ENCODE measurements at regions of chr5 and their contacts with region 1.

Region 1: DNA sequence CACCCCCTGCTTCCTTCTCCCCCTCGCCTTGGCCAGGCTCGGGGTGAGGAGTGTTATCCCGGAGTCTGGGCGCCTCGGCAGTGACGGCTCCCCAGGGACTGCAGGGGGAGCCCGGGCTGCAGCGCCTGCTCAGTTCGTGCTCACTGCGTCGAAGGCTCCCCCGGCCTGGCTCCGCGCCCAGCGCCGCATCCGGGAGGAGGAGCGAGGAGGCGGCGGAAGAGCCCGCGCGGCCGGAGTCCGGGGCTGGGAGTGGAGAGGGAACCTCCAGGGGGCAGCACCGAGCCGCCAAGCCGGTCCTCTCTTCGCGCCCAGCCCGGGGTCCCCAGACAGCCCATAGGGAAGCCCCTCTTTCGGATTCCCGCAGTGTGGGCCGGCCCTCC is 1.3 kb upstream of the EGR1 start:
- DNase-seq: peak; percentile 80 to 94 (median 91)
- H3K4me3 ChIP-seq: peak overlapping the region; percentile 66 to 100 (median 89)
- H3K27ac ChIP-seq: peak overlapping the region; percentile 82 to 99 (median 96)
- H3K27me3 ChIP-seq: no peaks in the 10 kb centered on the region
- CTCF ChIP-seq: peak; percentile 67 to 97 (median 89)

Region 2: DNA sequence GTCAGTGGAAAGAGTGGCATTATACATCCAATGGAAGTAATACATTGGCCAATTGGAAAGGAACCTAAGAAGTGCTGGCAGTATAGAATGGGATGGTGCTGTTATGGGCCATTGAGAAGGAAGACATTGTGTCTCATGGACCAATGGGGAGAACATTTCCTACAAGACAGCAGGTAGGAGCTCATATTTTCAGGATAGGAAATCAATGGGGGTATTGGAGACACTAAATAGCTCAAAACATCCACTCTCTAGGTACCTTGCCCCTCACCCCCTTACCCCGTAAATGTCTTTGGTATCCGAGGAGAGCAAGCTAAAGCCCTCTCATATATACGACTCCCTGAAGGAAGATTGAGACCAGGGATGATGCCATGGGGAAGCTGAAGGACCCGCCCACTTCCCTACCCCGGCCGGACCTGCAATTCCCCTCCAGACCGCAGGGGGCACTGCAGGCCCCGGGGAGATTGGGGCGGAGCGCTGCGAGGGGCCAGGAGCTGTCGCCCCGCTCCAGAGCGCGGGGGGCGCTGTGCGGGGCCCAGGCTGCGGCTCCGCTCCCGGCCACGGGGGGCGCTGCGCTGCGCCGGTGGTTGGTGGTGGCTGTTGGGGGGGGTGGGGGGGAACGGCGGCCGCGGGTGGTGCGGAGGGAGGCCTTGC is 111.8 kb before region 1 on chr5 and contains the start of gene KDM3B:
- intact Hi-C with region 1: loop called in 1 of 2 experiments (anchors 10 kb)
- DNase-seq: peak in 8 of 10 donors; percentile 40 to 86 (median 64)
- H3K4me3 ChIP-seq: peak within 1 kb of the TSS; percentile 62 to 98 (median 89)
- H3K27ac ChIP-seq: peak within 1 kb of the TSS; percentile 65 to 99 (median 96)
- H3K27me3 ChIP-seq: no peaks in the 10 kb centered on the region
- CTCF ChIP-seq: peak; percentile 77 to 97 (median 90)
- total RNA-seq, gene KDM3B: 50.2 to 81.2 (median 66.4) TPM

Region 3: DNA sequence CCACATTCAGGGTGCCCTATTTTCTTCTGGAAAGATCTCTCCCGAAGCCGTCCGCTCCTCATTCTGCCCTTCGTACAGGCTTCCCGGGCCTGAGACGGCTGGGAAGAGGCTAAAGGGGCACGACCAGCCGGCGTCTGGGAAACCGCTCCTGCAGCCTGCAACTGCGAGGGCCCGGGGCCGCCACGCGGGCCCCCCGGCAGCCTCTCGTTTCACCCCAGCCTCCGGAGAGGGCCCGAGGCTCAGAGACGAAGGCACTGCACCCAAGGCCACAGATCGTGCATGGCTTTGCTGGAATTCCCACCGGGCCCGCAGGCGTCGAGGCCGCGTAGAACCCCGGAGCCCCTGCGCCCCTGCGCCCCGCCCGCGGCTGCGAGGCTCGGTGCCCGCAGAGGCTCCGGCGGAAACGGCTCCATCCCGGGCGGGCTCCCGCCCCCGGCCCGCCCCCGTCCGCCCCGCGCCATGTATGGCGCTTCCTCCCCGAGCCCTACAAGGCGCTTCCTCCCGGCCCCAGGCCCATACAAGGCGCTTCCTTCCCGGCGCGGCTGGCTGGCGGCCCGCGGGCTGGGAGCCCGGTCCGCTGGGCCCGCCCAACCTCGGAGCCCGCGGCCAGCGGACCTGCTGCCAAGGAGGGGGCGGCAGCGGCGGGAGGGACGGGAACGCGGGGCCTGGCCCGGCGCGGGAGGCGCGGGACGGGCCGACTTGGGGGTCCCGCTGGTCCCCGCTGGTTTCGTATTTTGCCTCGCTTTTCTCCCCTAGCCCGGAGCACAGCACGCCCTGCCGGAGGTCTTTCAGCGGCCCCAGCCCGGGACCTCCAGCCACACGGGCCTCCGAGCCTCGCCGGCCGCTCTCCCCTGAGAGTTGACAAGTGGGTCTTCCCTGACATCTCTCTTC is 27.9 kb after region 1 on chr5:
- intact Hi-C with region 1: loop called (anchors 1 kb)
- DNase-seq: peak; percentile 81 to 96 (median 92)
- H3K4me3 ChIP-seq: peak overlapping the region; percentile 41 to 79 (median 68)
- H3K27ac ChIP-seq: peak overlapping the region in 51 of 59 donors; percentile 4 to 89 (median 66)
- H3K27me3 ChIP-seq: peaks cover 0 to 37% (median 3%) of the 10 kb centered on the region in 45 donors
- CTCF ChIP-seq: peak in 15 of 56 donors; percentile 5 to 46 (median 23)

Region 4: GRCh38 chr5:138503487-138504270 is 39.7 kb after region 1 on chr5:
- intact Hi-C with region 1: loop called in 1 of 2 experiments (anchors 5 kb)
- DNase-seq: peak in 3 of 10 donors; percentile 35 to 57 (median 42)
- H3K4me3 ChIP-seq: peak overlapping the region in 1 of 59 donors; percentile 8
- H3K27ac ChIP-seq: peak overlapping the region in 50 of 59 donors; percentile 3 to 87 (median 61)
- H3K27me3 ChIP-seq: no peaks in the 10 kb centered on the region
- CTCF ChIP-seq: peak; percentile 51 to 87 (median 78)

Region 5: DNA sequence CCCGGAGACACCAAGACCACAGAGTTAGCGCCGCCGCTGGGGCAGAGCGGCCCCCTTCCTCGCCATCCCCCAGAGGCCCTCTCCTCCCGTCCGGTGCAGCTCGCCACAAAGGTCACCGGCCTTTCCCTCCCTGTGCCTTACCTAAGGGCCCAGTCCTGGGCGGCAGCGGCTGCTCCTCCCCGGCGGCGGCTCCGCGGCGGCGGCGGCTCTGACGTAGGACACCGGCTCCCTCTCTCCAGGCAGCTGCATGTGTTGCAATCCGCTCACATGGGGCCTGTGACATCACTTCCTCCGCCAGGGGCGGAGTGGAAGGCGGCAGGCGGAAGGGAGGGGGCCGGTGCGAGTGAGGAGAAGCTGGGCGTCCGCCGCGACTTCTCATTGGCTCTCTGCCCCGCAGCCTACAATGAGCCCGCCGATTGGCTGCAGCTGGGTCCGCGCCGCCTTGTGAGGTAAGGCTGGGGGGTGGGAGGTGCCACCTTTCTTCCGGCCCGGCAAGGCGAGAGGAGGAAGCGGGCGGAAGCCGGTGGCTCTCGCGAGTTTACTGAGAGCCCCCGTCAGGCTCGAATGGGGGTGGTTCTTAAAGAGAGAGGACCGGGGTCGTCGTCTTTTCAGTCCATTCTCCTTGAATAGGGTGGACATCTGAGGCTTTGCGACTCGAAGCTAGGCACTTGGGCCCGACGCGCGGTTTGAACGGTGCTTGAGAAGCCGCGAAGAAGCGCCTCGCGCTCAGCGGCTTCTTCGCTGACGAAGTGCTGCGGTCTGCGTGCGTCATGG is 79.1 kb after region 1 on chr5 and contains the start of gene ETF1:
- intact Hi-C with region 1: loop called (anchors 5 to 10 kb)
- DNase-seq: peak; percentile 100
- H3K4me3 ChIP-seq: peak within 1 kb of the TSS; percentile 70 to 100 (median 95)
- H3K27ac ChIP-seq: peak within 1 kb of the TSS; percentile 73 to 99 (median 96)
- H3K27me3 ChIP-seq: no peaks in the 10 kb centered on the region
- CTCF ChIP-seq: peak in 33 of 56 donors; percentile 4 to 60 (median 29)
- total RNA-seq, gene ETF1: 35.2 to 73.6 (median 57.5) TPM

Measured in dorsolateral prefrontal cortex (tissue), 120 donors.